ENCODE measurements at regions of chr17 and their contacts with region 1.

Region 1: GRCh38 chr17:21201298-21201595 is 12.7 kb downstream of the TMEM11 start:
- DNase-seq: no peak
- ATAC-seq: no peak
- H3K4me3 ChIP-seq: no peak overlapping the region
- H3K4me3 Mint-ChIP-seq: no peak overlapping the region
- H3K27ac ChIP-seq: no peak overlapping the region
- H3K27ac Mint-ChIP-seq: peak overlapping the region; percentile 72
- H3K4me1 ChIP-seq: peaks cover 30% of the 10 kb centered on the region
- H3K4me1 Mint-ChIP-seq: peaks cover 30% of the 10 kb centered on the region
- H3K27me3 ChIP-seq: no peaks in the 10 kb centered on the region
- H3K27me3 Mint-ChIP-seq: no peaks in the 10 kb centered on the region
- CTCF ChIP-seq: no peak

Region 2: GRCh38 chr17:21171309-21171922 is 29.8 kb before region 1 on chr17:
- CTCF ChIA-PET with region 1: no interaction called
- POLR2A ChIA-PET with region 1: no interaction called
- intact Hi-C with region 1: loop called in 1 of 2 experiments (anchors 1 kb)
- DNase-seq: no peak
- ATAC-seq: no peak
- H3K4me3 ChIP-seq: no peak overlapping the region
- H3K4me3 Mint-ChIP-seq: no peak overlapping the region
- H3K27ac ChIP-seq: no peak overlapping the region
- H3K27ac Mint-ChIP-seq: no peak overlapping the region
- H3K4me1 ChIP-seq: no peaks in the 10 kb centered on the region
- H3K4me1 Mint-ChIP-seq: no peaks in the 10 kb centered on the region
- H3K27me3 ChIP-seq: no peaks in the 10 kb centered on the region
- H3K27me3 Mint-ChIP-seq: no peaks in the 10 kb centered on the region
- CTCF ChIP-seq: no peak